Posterior vena cava (tissue), 2 donors: ENCODE measurements at regions of chr5 and their contacts with region 1.

Region 1: GRCh38 chr5:149636851-149637246 is 55.6 kb downstream of the ARHGEF37 start:
- DNase-seq: peak; percentile 92

Region 2: GRCh38 chr5:149828161-149828884 is 191.5 kb after region 1 on chr5:
- intact Hi-C with region 1: loop called (anchors 5 kb)
- DNase-seq: peak; percentile 96

Region 3: DNA sequence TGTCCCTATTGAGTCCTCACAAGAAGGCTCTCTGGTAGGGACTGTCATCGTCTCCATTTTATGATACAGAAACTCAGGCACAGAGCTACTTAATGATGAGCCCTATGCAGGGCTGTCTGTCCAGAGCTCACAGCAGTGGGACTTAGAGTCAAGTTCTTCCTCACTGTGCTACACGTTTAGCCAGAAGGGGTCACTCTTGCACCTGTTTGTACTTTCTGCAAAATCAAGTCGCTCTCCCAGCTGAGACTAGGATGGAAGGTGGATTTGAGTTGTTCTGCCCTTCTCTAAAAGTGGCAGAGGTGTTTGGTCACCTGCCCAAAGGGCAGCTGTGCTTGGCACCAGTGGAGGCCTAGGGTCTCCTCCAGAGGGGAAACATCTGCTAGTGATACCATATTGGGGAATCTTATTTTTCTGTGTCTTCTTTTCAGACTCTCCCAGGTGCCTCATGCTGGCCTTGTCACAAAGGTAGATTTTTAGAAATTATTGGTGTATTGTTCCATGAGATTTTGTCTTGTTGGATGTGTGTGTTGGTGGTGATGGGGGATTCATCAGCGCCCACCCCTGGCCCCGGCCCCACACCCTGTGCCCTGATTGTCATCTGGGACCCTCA is 197.5 kb after region 1 on chr5:
- intact Hi-C with region 1: loop called (anchors 5 kb)
- DNase-seq: peak; percentile 54

Region 4: GRCh38 chr5:149990518-149991376 is 353.9 kb after region 1 on chr5:
- intact Hi-C with region 1: loop called in 1 of 2 experiments (anchors 5 kb)
- DNase-seq: no peak

Region 5: GRCh38 chr5:150311015-150311692 is 674.3 kb after region 1 on chr5:
- intact Hi-C with region 1: loop called in 1 of 2 experiments (anchors 5 kb)
- DNase-seq: no peak